IMR-90 (cell line): ENCODE measurements at regions of chr11 and their contacts with region 1.

Region 1: DNA sequence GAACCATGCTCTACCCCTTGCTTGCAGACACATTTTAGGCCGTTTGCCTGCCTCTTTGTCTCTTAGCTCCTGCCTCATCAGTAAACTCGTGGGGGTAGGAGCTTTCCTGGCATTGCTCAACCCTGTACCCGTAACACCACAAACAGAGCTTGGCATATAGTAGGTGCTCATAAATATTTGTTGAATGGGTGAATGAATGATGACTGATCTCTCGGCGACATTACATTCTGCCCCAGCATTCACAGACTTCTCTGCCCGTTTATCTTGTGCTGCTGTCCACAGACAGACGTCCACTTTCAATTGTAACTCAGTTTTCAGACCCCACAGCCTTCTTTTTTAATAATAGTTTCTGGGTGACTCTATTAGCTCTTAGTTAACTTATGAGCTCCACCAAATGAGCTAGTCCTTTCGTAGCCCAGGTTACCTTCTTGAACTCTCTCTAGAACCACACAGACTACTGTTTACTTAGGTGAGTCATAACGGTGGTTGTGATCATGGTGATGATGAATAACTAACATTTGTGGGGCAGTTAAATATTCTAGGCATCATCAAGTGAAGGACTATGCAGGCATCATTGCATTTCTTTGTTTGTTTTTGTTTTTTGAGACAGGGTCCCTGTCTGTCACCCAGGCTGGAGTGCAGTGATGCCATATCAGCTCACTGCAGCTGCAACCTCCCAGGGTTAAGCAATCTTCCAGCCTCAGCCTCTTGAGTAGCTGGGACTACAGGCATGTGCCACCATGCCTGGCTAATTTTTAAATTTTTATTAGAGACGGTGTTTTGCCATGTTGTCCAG is 188.5 kb downstream of the ADAMTS15 start:
- DNase-seq: peak; percentile 92
- ATAC-seq: peak; percentile 66
- H3K4me3 ChIP-seq: no peak overlapping the region
- H3K27ac ChIP-seq: peak overlapping the region; percentile 79
- H3K4me1 ChIP-seq: peaks cover 30% of the 10 kb centered on the region
- H3K27me3 ChIP-seq: no peaks in the 10 kb centered on the region
- CTCF ChIP-seq: no peak
- POLR2A ChIP-seq: no peak
- RAD21 ChIP-seq: peak; percentile 17; the same call in 1 of the 2 replicates

Region 2: DNA sequence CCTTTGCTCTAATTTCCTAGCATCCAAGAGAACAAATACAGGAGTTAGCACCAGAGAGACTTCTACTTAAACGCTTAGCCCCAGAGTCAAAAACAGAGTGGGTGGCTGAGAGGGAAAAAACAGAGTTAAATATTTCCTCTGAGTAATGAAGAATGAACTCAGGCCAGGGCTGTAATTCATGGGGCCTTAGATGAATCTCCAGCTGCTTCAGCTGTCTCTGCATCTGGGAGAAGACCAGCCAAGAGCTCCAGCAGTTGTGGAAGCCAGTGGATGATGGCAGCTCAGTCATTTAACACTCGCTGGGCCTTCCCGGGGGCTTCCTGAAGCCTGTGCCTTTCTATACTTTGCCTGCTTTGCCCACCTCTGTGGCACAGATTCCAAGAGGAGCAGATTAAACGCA is 194.2 kb before region 1 on chr11:
- CTCF ChIA-PET with region 1: no interaction called
- POLR2A ChIA-PET with region 1: interaction called, 15 read pairs
- dilution Hi-C with region 1: no loop called
- in situ Hi-C with region 1: no loop called
- intact Hi-C with region 1: no loop called
- DNase-seq: peak; percentile 61
- ATAC-seq: peak; percentile 65
- H3K4me3 ChIP-seq: no peak overlapping the region
- H3K27ac ChIP-seq: peak overlapping the region; percentile 43; the same call in 1 of the 2 replicates
- H3K4me1 ChIP-seq: peaks cover 2% of the 10 kb centered on the region
- H3K27me3 ChIP-seq: no peaks in the 10 kb centered on the region
- CTCF ChIP-seq: no peak
- POLR2A ChIP-seq: no peak
- RAD21 ChIP-seq: no peak

Region 3: DNA sequence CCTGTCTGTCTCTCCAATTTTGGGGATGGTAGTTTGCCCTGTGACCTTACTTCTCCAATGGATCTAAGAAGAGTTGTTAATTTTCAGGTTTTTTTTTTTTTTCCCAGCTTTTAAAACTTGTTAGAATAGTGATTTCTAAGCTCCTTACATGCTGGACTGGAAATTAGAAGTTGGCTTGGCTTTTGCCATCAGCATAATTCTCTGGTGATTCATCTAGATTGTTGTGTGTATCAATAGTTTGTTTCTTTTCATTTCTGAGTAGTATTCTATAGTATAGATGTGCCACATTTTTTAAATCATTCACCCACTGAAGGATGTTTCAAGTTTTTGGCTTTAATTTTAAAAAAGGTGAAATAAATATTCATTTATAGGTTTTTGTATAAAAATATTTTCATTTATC is 137.1 kb before region 1 on chr11:
- CTCF ChIA-PET with region 1: no interaction called
- POLR2A ChIA-PET with region 1: no interaction called
- dilution Hi-C with region 1: no loop called
- in situ Hi-C with region 1: no loop called
- intact Hi-C with region 1: no loop called
- DNase-seq: peak; percentile 56
- ATAC-seq: peak; percentile 77
- H3K4me3 ChIP-seq: no peak overlapping the region
- H3K27ac ChIP-seq: no peak overlapping the region
- H3K4me1 ChIP-seq: peaks cover 4% of the 10 kb centered on the region
- H3K27me3 ChIP-seq: no peaks in the 10 kb centered on the region
- CTCF ChIP-seq: no peak
- POLR2A ChIP-seq: no peak
- RAD21 ChIP-seq: no peak

Region 4: DNA sequence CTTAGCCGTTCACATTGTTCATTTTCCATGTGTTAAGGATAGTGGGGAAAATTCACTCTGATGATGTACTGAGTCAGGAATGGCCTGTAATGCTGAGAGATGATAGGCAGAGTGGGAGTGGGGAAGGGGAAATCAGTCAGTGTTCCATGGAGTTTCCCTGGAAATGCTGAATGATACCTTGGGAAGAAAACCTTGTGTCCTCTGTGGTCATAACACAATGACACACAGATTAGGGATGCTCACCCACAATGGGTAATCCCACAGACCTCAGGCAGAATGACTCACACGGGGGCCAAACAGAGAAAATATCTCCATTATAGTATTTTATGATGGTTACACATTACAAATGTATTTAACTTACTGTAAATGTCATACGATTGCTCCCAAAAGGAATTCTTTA is 161.4 kb after region 1 on chr11:
- CTCF ChIA-PET with region 1: no interaction called
- POLR2A ChIA-PET with region 1: no interaction called
- dilution Hi-C with region 1: no loop called
- in situ Hi-C with region 1: no loop called
- intact Hi-C with region 1: no loop called
- DNase-seq: peak; percentile 98
- ATAC-seq: peak; percentile 78
- H3K4me3 ChIP-seq: no peak overlapping the region
- H3K27ac ChIP-seq: no peak overlapping the region
- H3K4me1 ChIP-seq: peaks cover 6% of the 10 kb centered on the region
- H3K27me3 ChIP-seq: no peaks in the 10 kb centered on the region
- CTCF ChIP-seq: no peak
- POLR2A ChIP-seq: no peak
- RAD21 ChIP-seq: peak; percentile 29; the same call in 1 of the 2 replicates